ENCODE measurements at regions of chr1 and their contacts with region 1.

Region 1: DNA sequence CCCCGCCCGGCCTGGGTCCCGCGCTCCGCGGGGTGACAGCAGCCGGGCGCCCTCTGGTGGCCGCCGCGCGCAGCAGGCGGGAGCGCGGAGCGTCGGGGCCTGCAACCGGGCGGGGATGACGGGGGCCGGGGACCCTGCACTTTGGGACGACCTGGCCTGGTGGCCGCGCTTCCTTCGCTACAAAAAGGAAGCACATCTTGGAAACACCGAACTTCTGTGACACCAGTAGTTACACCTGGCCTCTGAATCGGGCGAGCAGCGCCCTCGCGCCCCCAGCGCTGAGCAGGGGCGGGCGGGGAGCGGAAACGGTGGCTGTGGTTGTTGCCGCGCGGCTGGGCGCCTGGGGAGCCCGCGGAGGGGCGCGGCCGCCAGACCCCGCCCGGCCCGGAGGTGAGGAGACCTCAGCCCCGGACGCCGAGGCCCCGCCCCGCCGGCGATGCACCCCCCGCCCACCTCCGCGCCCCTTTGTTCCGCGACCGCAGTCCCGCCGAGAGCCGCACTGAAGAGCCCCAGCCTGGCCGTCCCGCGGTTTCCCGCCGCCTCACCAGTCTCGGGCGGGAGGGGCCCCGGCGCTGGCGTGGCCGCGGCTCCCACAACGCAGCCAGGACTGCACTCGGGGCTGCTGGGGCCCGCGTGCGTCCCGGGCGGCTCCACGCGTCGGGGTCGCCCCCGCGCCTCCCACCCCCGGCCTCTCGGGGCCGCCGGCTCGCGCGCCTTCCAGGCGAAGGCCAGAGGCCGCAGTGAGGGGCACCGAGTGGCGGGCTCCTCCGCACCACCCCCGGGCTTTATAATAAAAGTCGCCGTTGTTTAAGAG is 59.3 kb downstream of the H3-3A start:
- DNase-seq: peak; percentile 88
- ATAC-seq: peak; percentile 66
- H3K4me3 Mint-ChIP-seq: peak overlapping the region; percentile 92
- H3K27ac Mint-ChIP-seq: peak overlapping the region; percentile 100
- H3K4me1 Mint-ChIP-seq: peaks cover 79% of the 10 kb centered on the region
- H3K27me3 Mint-ChIP-seq: no peaks in the 10 kb centered on the region
- CTCF ChIP-seq: no peak

Region 2: DNA sequence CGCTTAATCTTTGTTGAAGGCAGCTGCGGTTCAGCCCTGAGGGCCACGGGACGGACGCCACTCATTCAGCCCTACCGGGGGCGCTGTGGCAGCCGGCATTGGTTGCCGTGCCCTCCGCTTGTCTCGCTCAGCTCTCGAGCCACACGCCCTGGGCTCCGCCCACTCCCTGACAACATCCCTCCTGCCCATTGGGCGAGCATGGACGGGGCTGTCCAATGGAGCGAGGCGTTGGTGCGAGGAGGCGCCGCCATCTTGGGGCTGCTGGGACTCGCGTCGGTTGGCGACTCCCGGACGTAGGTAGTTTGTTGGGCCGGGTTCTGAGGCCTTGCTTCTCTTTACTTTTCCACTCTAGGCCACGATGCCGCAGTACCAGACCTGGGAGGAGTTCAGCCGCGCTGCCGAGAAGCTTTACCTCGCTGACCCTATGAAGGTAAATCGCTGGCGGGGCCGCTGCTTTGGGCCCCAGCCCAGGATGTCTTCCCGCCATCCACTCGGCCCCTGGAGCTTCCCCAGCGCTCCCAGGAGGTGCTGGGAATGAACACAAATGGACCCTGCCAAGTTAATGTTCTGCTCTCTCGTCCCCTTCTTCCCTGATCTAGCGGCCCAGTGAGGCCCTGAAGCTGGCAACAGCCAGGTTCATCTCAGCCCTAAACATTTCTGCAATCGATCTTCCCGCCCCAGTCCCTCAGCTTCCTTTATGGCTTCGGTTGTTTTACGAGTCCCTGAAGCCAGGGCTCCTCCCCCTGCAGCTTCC is 344.0 kb before region 1 on chr1 and contains the start of gene SRP9:
- CTCF ChIA-PET with region 1: interaction called, 3 read pairs
- POLR2A ChIA-PET with region 1: interaction called, 3 read pairs
- intact Hi-C with region 1: loop called (anchors 5 kb)
- DNase-seq: peak; percentile 94
- ATAC-seq: peak; percentile 97
- H3K4me3 Mint-ChIP-seq: no peak within 1 kb of the TSS
- H3K27ac Mint-ChIP-seq: no peak within 1 kb of the TSS
- H3K4me1 Mint-ChIP-seq: peaks cover 37% of the 10 kb centered on the region
- H3K27me3 Mint-ChIP-seq: no peaks in the 10 kb centered on the region
- CTCF ChIP-seq: no peak
- total RNA-seq, gene SRP9: 141 and 143 TPM in 2 replicates

Region 3: GRCh38 chr1:225999227-225999911 is 122.4 kb before region 1 on chr1 and contains the start of gene SDE2:
- CTCF ChIA-PET with region 1: interaction called, 3 read pairs
- POLR2A ChIA-PET with region 1: interaction called, 27 read pairs
- intact Hi-C with region 1: loop called (anchors 1 kb)
- DNase-seq: peak; percentile 99
- ATAC-seq: peak; percentile 82
- H3K4me3 Mint-ChIP-seq: peak within 1 kb of the TSS; percentile 100
- H3K27ac Mint-ChIP-seq: peak within 1 kb of the TSS; percentile 100
- H3K4me1 Mint-ChIP-seq: peaks cover 81% of the 10 kb centered on the region
- H3K27me3 Mint-ChIP-seq: no peaks in the 10 kb centered on the region
- CTCF ChIP-seq: no peak
- total RNA-seq, gene SDE2: 21.1 and 21.8 TPM in 2 replicates

Region 4: GRCh38 chr1:226135059-226135651 is 13.4 kb after region 1 on chr1:
- CTCF ChIA-PET with region 1: interaction called, 10 read pairs
- POLR2A ChIA-PET with region 1: interaction called, 34 read pairs
- intact Hi-C with region 1: loop called (anchors 1 kb)
- DNase-seq: no peak
- ATAC-seq: no peak
- H3K4me3 Mint-ChIP-seq: no peak overlapping the region
- H3K27ac Mint-ChIP-seq: peak overlapping the region; percentile 96
- H3K4me1 Mint-ChIP-seq: peaks cover 54% of the 10 kb centered on the region
- H3K27me3 Mint-ChIP-seq: no peaks in the 10 kb centered on the region
- CTCF ChIP-seq: no peak

Region 5: DNA sequence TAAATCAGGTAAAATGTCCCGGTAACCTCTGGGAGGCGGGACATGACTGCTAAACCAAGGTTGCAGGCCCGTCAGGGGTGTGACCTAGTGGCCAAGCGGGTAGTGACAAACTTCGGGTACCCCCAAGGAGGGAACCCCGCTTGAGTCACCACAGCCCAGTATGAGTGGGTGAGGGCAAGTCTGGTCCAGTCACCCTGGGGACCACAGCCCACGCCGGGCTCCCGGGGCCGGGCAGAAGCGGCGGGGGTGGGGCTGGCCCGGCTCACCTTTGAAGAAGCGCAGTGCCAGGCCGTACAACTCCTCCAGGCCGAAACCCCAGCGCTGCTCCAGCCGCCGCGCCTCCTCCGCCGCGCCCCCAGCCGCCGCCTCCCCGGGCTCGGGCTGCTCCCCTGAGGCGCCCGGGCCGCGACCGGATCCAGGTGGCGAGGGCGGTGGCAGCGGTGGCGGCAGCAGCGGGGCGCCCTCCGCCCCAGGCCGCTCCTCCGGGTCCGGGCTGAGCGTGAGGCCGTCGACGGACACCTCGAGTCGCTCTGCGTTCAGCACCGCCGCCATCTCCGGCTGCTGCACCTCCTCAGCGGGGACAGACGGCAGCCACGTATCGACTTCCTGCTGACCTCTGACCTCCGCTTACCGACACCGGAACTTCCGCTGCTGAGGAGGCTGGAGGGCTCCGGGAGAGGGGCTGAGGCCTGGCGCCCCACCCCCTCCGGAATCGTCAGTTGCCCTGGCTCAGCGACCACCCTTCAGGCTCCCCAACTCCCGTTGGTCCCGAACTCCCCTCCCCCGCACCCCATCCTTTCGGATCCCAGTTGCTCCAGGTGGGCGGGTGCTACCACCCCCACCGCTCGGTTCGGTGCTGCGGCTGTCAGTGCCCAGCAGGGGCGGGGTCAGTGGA is 64.6 kb after region 1 on chr1 and contains the start of gene ACBD3:
- CTCF ChIA-PET with region 1: interaction called, 81 read pairs
- POLR2A ChIA-PET with region 1: interaction called, 21 read pairs
- intact Hi-C with region 1: loop called (anchors 1 kb)
- DNase-seq: peak; percentile 79
- ATAC-seq: peak; percentile 93
- H3K4me3 Mint-ChIP-seq: peak within 1 kb of the TSS; percentile 94
- H3K27ac Mint-ChIP-seq: peak within 1 kb of the TSS; percentile 94
- H3K4me1 Mint-ChIP-seq: peaks cover 45% of the 10 kb centered on the region
- H3K27me3 Mint-ChIP-seq: no peaks in the 10 kb centered on the region
- CTCF ChIP-seq: no peak
- total RNA-seq, gene ACBD3: 38.6 and 41.4 TPM in 2 replicates

Region 6: DNA sequence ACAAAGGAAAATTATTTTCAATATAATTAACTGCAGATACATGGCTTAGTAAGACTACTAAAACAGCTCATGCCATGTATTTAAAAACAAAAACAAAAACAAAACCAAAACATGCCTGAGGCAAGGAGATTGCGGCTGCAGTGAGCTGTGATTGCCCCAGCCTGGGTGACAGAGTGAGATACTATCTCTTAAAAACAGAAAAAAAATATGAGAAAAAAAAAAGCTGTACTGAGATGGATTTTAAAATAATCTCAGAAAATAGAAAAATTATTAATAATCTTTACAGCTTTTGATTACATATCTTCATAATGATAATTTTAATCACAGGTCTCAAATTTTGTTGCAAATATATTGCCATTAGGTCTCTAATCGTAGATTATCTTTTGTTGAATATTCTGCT is 211.2 kb after region 1 on chr1:
- CTCF ChIA-PET with region 1: interaction called, 67 read pairs
- POLR2A ChIA-PET with region 1: interaction called, 15 read pairs
- intact Hi-C with region 1: loop called (anchors 1 kb)
- DNase-seq: no peak
- ATAC-seq: no peak
- H3K4me3 Mint-ChIP-seq: no peak overlapping the region
- H3K27ac Mint-ChIP-seq: peak overlapping the region; percentile 55
- H3K4me1 Mint-ChIP-seq: peaks cover 7% of the 10 kb centered on the region
- H3K27me3 Mint-ChIP-seq: no peaks in the 10 kb centered on the region
- CTCF ChIP-seq: no peak

Region 7: GRCh38 chr1:226679853-226680516 is 558.2 kb after region 1 on chr1:
- CTCF ChIA-PET with region 1: no interaction called
- POLR2A ChIA-PET with region 1: no interaction called
- intact Hi-C with region 1: loop called (anchors 10 kb)
- DNase-seq: peak; percentile 69
- ATAC-seq: peak; percentile 38
- H3K4me3 Mint-ChIP-seq: peak overlapping the region; percentile 86
- H3K27ac Mint-ChIP-seq: peak overlapping the region; percentile 97
- H3K4me1 Mint-ChIP-seq: peaks cover 99% of the 10 kb centered on the region
- H3K27me3 Mint-ChIP-seq: no peaks in the 10 kb centered on the region
- CTCF ChIP-seq: no peak

Measured in activated B cell treated with CpG ODN at 0.5 μM for 24 hours (primary cell).